ENCODE measurements at regions of chr20 and their contacts with region 1.

Region 1: GRCh38 chr20:31661625-31662371 is 24.1 kb downstream of the COX4I2 start:
- DNase-seq: peak; percentile 71
- H3K4me3 Mint-ChIP-seq: peak overlapping the region; percentile 58
- H3K27ac Mint-ChIP-seq: no peak overlapping the region
- H3K4me1 Mint-ChIP-seq: peaks cover 19% of the 10 kb centered on the region
- H3K27me3 Mint-ChIP-seq: no peaks in the 10 kb centered on the region
- CTCF ChIP-seq: peak; percentile 75

Region 2: DNA sequence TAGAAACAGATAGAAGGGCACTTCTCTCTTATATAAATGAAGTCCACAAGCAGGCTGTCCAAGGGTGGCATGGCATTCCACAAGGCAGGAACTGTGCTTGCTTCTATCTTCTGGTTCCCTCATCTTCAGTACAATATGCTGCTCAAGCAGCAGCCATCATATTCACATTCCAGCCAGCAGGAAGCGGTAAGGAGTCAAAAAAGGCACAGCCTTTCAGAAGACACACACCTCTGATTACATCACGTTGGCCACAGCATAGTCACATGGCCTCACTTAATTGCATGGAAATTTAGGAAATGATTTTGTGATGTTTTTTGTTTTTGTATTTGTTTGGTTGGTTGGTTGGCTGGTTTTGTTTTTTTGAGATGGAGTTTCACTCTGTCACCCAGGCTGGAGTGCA is 167.7 kb before region 1 on chr20:
- CTCF ChIA-PET with region 1: no interaction called
- POLR2A ChIA-PET with region 1: no interaction called
- intact Hi-C with region 1: no loop called
- DNase-seq: peak; percentile 62
- H3K4me3 Mint-ChIP-seq: no peak overlapping the region
- H3K27ac Mint-ChIP-seq: no peak overlapping the region
- H3K4me1 Mint-ChIP-seq: no peaks in the 10 kb centered on the region
- H3K27me3 Mint-ChIP-seq: peaks cover 24% of the 10 kb centered on the region
- CTCF ChIP-seq: peak; percentile 18

Region 3: DNA sequence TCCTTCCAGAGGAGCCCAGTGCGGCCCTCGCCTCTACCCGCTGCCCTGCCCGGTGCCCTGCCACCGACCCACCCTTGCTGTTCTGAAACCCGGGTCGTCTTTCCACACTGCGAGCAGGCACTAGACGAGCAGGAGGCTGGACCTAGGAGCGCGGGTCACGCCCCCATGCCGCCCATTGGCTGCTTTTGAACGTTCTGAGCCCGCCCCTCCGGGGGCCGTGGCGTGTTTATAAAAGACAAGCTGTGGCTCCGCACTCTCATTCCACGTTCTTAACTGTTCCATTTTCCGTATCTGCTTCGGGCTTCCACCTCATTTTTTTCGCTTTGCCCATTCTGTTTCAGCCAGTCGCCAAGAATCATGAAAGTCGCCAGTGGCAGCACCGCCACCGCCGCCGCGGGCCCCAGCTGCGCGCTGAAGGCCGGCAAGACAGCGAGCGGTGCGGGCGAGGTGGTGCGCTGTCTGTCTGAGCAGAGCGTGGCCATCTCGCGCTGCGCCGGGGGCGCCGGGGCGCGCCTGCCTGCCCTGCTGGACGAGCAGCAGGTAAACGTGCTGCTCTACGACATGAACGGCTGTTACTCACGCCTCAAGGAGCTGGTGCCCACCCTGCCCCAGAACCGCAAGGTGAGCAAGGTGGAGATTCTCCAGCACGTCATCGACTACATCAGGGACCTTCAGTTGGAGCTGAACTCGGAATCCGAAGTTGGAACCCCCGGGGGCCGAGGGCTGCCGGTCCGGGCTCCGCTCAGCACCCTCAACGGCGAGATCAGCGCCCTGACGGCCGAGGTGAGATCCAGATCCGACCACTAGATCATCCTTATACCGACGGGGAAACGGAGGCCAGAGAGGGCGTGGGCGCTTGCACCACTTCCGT is 56.5 kb before region 1 on chr20 and contains the start of gene ID1:
- CTCF ChIA-PET with region 1: interaction called, 28 read pairs
- POLR2A ChIA-PET with region 1: interaction called, 6 read pairs
- intact Hi-C with region 1: no loop called
- DNase-seq: peak; percentile 98
- H3K4me3 Mint-ChIP-seq: peak within 1 kb of the TSS; percentile 88
- H3K27ac Mint-ChIP-seq: peak within 1 kb of the TSS; percentile 81
- H3K4me1 Mint-ChIP-seq: peaks cover 24% of the 10 kb centered on the region
- H3K27me3 Mint-ChIP-seq: no peaks in the 10 kb centered on the region
- CTCF ChIP-seq: no peak
- total RNA-seq, gene ID1: 35.7 and 38.4 TPM in 2 replicates

Region 4: GRCh38 chr20:31618771-31619170 is 43.0 kb before region 1 on chr20:
- CTCF ChIA-PET with region 1: no interaction called
- POLR2A ChIA-PET with region 1: no interaction called
- intact Hi-C with region 1: no loop called
- DNase-seq: no peak
- H3K4me3 Mint-ChIP-seq: no peak overlapping the region
- H3K27ac Mint-ChIP-seq: no peak overlapping the region
- H3K4me1 Mint-ChIP-seq: no peaks in the 10 kb centered on the region
- H3K27me3 Mint-ChIP-seq: no peaks in the 10 kb centered on the region
- CTCF ChIP-seq: no peak

Region 5: GRCh38 chr20:31644701-31645100 is 17.1 kb before region 1 on chr20:
- CTCF ChIA-PET with region 1: interaction called, 19 read pairs
- POLR2A ChIA-PET with region 1: interaction called, 5 read pairs
- intact Hi-C with region 1: no loop called
- DNase-seq: no peak
- H3K4me3 Mint-ChIP-seq: no peak overlapping the region
- H3K27ac Mint-ChIP-seq: no peak overlapping the region
- H3K4me1 Mint-ChIP-seq: no peaks in the 10 kb centered on the region
- H3K27me3 Mint-ChIP-seq: no peaks in the 10 kb centered on the region
- CTCF ChIP-seq: no peak

Region 6: DNA sequence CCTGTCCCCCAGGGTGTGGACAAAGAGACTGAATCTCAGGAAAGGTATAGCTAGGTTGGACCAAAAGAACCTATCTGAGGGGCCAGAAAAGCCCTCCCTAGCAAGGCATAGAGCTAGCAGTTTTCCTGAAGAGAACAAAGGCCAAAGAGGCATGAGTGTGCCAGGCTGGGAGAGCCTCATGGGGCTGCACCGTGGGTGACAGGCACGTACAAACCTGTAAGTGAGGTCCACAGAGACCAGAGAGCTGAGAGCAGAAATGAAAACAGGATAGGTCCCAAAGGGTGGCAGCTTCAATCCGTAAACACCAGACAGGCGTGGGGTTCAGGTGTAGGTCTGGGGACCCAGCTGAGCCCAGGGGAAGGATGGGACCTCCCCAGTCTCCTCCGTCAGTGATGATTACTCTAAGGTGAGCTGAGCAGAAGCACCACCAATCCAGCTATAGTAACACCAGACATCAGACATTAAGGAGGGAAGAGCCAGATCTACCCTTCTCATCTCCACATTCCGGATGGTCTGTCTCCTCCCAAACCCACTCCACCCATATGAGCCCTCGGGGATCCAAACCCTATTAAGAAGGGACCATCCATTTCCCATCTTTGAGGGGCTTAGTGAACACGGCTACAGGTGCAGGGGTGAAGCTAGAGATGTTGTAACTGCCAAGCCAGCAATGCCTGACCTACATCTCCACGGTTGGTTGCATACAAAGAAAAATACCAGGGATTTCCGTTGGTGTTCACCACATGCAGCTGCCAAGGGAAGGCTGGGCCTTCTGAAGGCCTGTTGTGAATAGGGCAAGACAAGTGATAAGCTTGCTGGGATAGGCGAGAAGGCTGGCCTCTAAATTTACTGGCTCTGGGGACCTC is 22.6 kb after region 1 on chr20:
- CTCF ChIA-PET with region 1: interaction called, 174 read pairs
- POLR2A ChIA-PET with region 1: interaction called, 18 read pairs
- intact Hi-C with region 1: no loop called
- DNase-seq: no peak
- H3K4me3 Mint-ChIP-seq: no peak overlapping the region
- H3K27ac Mint-ChIP-seq: peak overlapping the region; percentile 66
- H3K4me1 Mint-ChIP-seq: peaks cover 30% of the 10 kb centered on the region
- H3K27me3 Mint-ChIP-seq: no peaks in the 10 kb centered on the region
- CTCF ChIP-seq: no peak

Region 7: DNA sequence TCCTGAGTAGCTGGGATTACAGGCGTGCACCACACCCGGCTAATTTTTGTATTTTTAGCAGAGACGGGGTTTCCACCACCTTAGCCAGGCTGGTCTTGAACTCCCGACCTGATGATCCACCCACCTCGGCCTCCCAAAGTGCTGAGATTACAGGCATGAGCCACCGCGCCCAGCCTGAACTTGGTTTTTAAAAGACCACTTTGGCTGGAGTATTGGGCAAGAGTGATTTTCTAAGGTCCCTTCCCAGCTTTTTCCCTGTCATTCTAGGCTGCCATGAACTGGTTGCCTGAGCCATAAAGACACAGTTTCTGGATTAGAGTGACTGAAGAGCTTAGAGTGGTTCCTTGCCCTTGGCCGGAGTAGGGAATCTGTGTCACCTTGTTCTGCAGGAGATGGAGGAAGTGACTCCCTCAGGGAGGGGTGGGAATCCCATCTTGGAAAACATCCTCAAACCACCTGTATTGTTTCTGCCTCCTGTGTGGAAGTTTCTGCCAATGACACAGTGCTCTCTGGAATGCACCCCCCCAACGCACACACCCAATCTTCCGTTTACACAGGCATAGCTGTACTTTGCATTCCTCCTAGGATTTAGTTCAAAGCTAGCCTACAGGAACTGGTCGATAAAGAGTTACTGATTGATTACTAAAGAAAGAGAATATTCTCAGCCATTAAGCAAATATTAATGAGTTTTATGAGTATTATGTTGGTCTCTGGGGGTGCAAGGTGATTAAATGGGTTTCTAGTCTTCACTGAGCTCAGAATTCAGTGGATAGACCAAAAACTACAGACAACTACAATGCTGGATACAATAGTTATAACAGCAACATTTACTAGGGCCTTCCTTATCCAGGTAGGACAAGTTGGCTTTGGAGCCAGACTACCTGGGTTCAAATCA is 42.7 kb after region 1 on chr20:
- CTCF ChIA-PET with region 1: interaction called, 120 read pairs
- POLR2A ChIA-PET with region 1: interaction called, 54 read pairs
- intact Hi-C with region 1: no loop called
- DNase-seq: peak; percentile 84
- H3K4me3 Mint-ChIP-seq: peak overlapping the region; percentile 7
- H3K27ac Mint-ChIP-seq: peak overlapping the region; percentile 92
- H3K4me1 Mint-ChIP-seq: peaks cover 58% of the 10 kb centered on the region
- H3K27me3 Mint-ChIP-seq: no peaks in the 10 kb centered on the region
- CTCF ChIP-seq: no peak

Region 8: DNA sequence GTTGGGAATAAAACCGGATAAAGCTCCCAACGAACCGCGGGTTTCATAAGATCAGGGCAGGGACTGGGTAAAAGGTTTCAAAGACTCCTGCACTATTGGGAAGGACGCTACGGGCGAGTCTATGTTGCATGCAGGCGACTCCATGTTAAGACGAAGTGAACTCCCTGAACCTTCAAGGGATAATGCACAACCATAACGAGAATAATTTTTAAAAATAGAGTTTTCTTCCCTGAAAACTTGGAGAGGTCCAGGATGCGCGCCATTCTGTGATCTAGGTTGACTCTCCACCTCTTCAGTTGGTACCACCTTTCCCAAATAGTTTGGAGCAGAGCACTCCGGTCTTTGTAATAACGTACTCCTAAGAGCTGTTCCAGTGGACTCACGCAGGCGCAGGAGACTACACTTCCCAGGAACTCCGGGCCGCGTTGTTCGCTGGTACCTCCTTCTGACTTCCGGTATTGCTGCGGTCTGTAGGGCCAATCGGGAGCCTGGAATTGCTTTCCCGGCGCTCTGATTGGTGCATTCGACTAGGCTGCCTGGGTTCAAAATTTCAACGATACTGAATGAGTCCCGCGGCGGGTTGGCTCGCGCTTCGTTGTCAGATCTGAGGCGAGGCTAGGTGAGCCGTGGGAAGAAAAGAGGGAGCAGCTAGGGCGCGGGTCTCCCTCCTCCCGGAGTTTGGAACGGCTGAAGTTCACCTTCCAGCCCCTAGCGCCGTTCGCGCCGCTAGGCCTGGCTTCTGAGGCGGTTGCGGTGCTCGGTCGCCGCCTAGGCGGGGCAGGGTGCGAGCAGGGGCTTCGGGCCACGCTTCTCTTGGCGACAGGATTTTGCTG is 77.1 kb after region 1 on chr20 and contains the start of gene TPX2:
- CTCF ChIA-PET with region 1: interaction called, 11 read pairs
- POLR2A ChIA-PET with region 1: interaction called, 17 read pairs
- intact Hi-C with region 1: no loop called
- DNase-seq: peak; percentile 98
- H3K4me3 Mint-ChIP-seq: no peak within 1 kb of the TSS
- H3K27ac Mint-ChIP-seq: no peak within 1 kb of the TSS
- H3K4me1 Mint-ChIP-seq: no peaks in the 10 kb centered on the region
- H3K27me3 Mint-ChIP-seq: no peaks in the 10 kb centered on the region
- CTCF ChIP-seq: no peak
- total RNA-seq, gene TPX2: 45.3 and 79.6 TPM in 2 replicates